ENCODE measurements at regions of chr3 and their contacts with region 1.

Region 1: GRCh38 chr3:46923559-46924350 is 46.2 kb downstream of the PTH1R start:
- DNase-seq: peak; percentile 37 to 63
- ATAC-seq: peak; percentile 87 to 88
- H3K4me3 ChIP-seq: no peak overlapping the region
- H3K27ac ChIP-seq: peak overlapping the region; percentile 60 to 84
- H3K4me1 ChIP-seq: peaks cover 35% of the 10 kb centered on the region
- CTCF ChIP-seq: peak; percentile 78
- EP300 ChIP-seq: no peak
- POLR2A ChIP-seq: no peak
- RAD21 ChIP-seq: peak; percentile 80 to 87

Region 2: DNA sequence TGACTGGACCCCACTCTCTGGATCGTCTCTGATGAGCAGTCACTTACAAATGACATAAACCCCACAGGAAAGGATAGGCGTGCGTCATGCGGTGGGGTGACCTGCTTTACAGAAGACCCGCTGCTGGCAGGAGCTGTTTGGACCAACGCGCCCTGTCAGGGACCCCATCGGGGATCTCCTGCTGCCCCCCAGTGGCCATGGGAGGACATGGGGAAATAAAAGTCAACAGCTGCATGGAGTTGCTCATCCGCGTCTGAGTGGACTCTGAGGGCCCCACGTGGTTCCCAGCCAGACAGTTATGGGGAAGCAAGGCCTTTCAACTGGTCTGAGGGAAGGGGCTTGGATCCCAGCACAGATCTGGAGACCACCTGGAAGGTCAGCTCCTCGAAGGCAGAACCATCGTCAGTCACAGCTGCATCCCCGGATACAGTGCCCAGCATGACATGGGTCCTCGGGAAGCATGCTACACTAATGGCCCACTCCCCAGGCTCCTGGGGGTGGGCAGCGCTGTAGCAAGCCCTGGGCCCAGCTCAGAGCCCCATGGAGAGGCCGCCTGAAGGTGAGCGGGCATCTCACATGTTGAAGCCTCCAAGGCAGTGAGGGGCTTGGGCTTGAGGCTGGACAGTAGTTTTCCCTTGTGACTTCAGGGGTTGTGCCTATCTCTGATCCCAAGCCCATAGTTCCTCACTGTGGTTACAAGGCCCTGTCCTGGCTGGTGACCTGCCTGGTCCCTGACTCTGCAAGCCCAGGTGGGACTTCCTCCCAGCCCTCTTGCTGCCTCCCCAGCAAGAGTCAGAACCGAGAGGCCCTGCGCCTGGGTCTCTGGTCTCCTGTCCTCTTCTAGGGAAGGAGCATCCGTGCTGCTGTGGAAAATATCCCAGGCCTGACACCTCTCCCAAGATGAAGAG is 14.0 kb before region 1 on chr3:
- CTCF ChIA-PET with region 1: interaction called, 39 read pairs
- POLR2A ChIA-PET with region 1: no interaction called
- DNase-seq: peak; percentile 70 to 88
- ATAC-seq: peak; percentile 73 to 88
- H3K4me3 ChIP-seq: no peak overlapping the region
- H3K27ac ChIP-seq: peak overlapping the region; percentile 53 to 76; a peak in 5 of 6 replicates
- H3K4me1 ChIP-seq: peaks cover 17% of the 10 kb centered on the region
- CTCF ChIP-seq: peak; percentile 72
- EP300 ChIP-seq: no peak
- POLR2A ChIP-seq: no peak
- RAD21 ChIP-seq: peak; percentile 72 to 79

Region 3: DNA sequence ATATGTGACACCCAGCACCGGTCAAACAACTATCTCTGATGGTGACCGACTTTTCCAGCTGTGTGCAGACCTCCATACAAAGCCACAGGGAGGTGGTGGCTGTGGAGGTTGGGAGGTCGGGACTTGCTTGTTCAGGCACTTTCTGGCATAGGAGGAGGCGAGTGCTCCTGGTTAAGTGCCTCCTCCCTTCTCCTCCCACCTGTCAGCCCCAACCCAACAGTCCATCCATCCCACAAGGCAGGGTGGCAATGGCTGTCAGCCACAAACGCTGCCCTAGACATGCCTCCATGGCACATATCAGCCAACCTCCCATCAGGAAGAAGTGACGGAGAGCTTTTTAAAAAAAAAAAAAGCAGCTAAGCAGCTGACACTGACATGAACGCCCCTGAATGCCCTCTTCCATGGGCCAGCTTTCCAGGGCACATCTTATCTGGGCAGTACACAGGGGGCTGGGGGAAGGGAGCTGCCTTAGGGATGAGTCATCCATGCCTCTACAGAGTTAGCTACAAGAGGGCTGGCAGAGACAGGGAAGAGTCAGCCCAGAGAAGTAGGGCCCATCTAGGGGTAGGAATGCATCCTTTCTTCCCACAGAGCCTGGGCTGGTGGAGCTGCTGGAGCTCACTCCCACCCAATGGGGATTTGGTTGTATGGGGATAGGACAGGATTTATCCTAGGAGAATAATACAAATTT is 11.6 kb after region 1 on chr3:
- CTCF ChIA-PET with region 1: interaction called, 62 read pairs
- POLR2A ChIA-PET with region 1: interaction called, 4 read pairs
- DNase-seq: peak; percentile 80 to 83
- ATAC-seq: peak; percentile 91 to 92
- H3K4me3 ChIP-seq: 0 out of 3 replicates have a peak overlapping the region, but pooled peaks have one; percentile 6
- H3K27ac ChIP-seq: peak overlapping the region; percentile 85 to 88
- H3K4me1 ChIP-seq: peaks cover 83% of the 10 kb centered on the region
- CTCF ChIP-seq: peak; percentile 34; the same call in 2 of the 3 replicates
- EP300 ChIP-seq: no peak
- POLR2A ChIP-seq: no peak
- RAD21 ChIP-seq: peak; percentile 14 to 15; a peak in 2 of 5 replicates

Region 4: DNA sequence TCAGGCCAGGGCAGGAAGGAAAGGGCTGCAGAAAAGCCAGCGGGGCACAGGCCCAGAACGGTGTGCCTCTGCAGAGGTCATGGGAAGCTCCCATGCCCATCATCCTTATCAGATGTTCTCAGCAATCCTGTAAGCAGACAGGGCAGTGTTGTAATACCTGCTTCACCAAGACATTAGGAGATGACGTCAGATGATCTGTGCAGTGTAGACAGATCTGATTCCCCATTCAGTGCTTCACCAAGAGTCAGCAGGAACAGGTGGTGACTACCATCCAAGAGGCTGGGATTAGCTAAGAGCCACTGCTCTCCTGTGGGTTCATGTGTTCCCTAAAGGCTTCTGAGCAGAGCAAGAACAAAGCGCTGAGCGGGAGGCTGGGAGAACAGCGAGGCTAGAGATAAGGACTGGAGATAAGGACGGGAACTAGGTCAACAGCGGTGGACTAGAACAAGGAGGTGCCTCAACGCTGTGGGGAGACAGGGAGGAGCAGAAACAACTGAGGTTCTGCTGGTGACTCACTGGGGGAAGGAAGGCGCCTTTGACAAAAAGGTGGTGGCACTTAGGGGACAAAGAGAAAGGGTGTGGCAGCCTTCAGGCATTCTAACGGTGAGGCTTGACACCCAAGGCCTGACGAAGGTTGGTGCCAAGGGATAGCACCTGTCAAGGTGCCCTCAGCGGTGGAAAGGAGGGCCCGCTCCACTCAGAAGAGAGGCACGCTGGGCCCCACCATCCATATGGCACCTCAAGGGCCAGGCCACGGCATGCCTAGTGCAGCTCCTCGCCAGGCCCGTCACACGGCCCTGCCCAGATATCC is 24.4 kb after region 1 on chr3:
- CTCF ChIA-PET with region 1: interaction called, 32 read pairs
- POLR2A ChIA-PET with region 1: no interaction called
- DNase-seq: peak; percentile 55 to 89
- ATAC-seq: peak; percentile 72 to 76
- H3K4me3 ChIP-seq: no peak overlapping the region
- H3K27ac ChIP-seq: peak overlapping the region; percentile 90 to 97
- H3K4me1 ChIP-seq: peaks cover 85% of the 10 kb centered on the region
- CTCF ChIP-seq: no peak
- EP300 ChIP-seq: peak in 1 of 2 experiments; percentile 48; a peak in 2 of 5 replicates
- POLR2A ChIP-seq: no peak
- RAD21 ChIP-seq: no peak; a peak in 1 of 5 replicates

Region 5: GRCh38 chr3:46953234-46954010 is 29.7 kb after region 1 on chr3:
- CTCF ChIA-PET with region 1: interaction called, 21 read pairs
- POLR2A ChIA-PET with region 1: no interaction called
- DNase-seq: no peak
- ATAC-seq: no peak
- H3K4me3 ChIP-seq: no peak overlapping the region
- H3K27ac ChIP-seq: peak overlapping the region; percentile 32 to 55; a peak in 3 of 6 replicates
- H3K4me1 ChIP-seq: peaks cover 75% of the 10 kb centered on the region
- CTCF ChIP-seq: no peak
- EP300 ChIP-seq: no peak
- POLR2A ChIP-seq: no peak
- RAD21 ChIP-seq: no peak

Region 6: GRCh38 chr3:46991406-46992165 is 67.8 kb after region 1 on chr3:
- CTCF ChIA-PET with region 1: interaction called, 54 read pairs
- POLR2A ChIA-PET with region 1: no interaction called
- DNase-seq: no peak
- ATAC-seq: no peak
- H3K4me3 ChIP-seq: no peak overlapping the region
- H3K27ac ChIP-seq: no peak overlapping the region
- H3K4me1 ChIP-seq: peaks cover 16% of the 10 kb centered on the region
- CTCF ChIP-seq: no peak
- EP300 ChIP-seq: no peak
- POLR2A ChIP-seq: no peak
- RAD21 ChIP-seq: no peak

Region 7: DNA sequence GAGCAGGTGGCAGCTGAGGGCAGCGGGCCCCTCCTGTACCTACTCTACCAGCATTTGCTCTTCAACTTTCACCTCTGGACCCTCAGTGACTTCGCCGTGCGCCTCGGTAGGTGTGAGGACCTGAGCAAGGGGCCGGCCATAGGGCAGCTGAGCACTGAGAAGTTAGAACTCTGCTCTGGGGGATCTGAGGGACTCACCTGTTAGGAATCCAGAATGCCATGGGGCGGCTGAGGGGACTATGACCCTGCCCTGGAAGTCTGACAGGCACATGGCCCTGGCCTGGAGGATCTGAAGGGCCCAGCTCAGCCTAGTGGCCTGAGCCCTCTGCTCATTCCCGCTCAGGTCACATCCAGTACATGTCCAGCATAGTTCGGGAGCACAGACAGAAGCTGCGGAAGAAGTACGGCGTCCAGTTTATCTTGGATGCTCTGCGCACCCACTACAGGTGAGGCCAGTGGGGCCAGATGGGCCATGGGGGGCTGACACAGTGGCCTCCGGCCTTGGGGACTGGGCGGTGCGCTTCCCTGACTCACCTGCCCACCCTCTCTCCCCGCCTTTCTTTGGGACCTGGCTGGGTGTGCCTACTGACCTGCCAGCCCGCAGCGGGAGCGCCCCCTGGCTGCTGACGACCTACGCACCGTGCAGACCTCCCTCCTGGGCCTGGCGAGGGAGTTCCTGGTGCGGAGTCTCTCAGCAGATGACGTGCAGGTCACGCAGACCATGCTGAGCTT is 74.5 kb after region 1 on chr3:
- CTCF ChIA-PET with region 1: interaction called, 54 read pairs
- POLR2A ChIA-PET with region 1: no interaction called
- DNase-seq: peak; percentile 64 to 69
- ATAC-seq: peak; percentile 77 to 91
- H3K4me3 ChIP-seq: no peak overlapping the region
- H3K27ac ChIP-seq: peak overlapping the region in 1 of 2 experiments; percentile 53; a peak in 4 of 6 replicates
- H3K4me1 ChIP-seq: peaks cover 12% of the 10 kb centered on the region
- CTCF ChIP-seq: peak; percentile 64
- EP300 ChIP-seq: no peak
- POLR2A ChIP-seq: no peak
- RAD21 ChIP-seq: peak; percentile 80 to 81

Region 8: GRCh38 chr3:47186285-47186684 is 262.5 kb after region 1 on chr3:
- CTCF ChIA-PET with region 1: no interaction called
- POLR2A ChIA-PET with region 1: no interaction called
- DNase-seq: no peak
- ATAC-seq: no peak
- H3K4me3 ChIP-seq: no peak overlapping the region
- H3K27ac ChIP-seq: no peak overlapping the region
- H3K4me1 ChIP-seq: no peaks in the 10 kb centered on the region
- CTCF ChIP-seq: no peak
- EP300 ChIP-seq: no peak
- POLR2A ChIP-seq: no peak
- RAD21 ChIP-seq: no peak